GM23248 (cell line): ENCODE measurements at regions of chr11 and their contacts with region 1.

Region 1: GRCh38 chr11:27485930-27486773 is 13.6 kb upstream of the LGR4 start:
- DNase-seq: peak; percentile 67
- H3K4me3 ChIP-seq: no peak overlapping the region
- H3K27ac ChIP-seq: no peak overlapping the region
- H3K4me1 ChIP-seq: peaks cover 4% of the 10 kb centered on the region; the same call in 1 of the 2 replicates
- H3K27me3 ChIP-seq: no peaks in the 10 kb centered on the region

Region 2: GRCh38 chr11:26319906-26320305 is 1166.2 kb before region 1 on chr11:
- in situ Hi-C with region 1: loop called (anchors 25 kb)
- DNase-seq: peak; percentile 53
- H3K4me3 ChIP-seq: no peak overlapping the region
- H3K27ac ChIP-seq: no peak overlapping the region
- H3K4me1 ChIP-seq: no peaks in the 10 kb centered on the region
- H3K27me3 ChIP-seq: no peaks in the 10 kb centered on the region

Region 3: GRCh38 chr11:26753723-26754504 is 732.2 kb before region 1 on chr11:
- in situ Hi-C with region 1: loop called (anchors 10 kb)
- DNase-seq: peak; percentile 83
- H3K4me3 ChIP-seq: no peak overlapping the region
- H3K27ac ChIP-seq: no peak overlapping the region
- H3K4me1 ChIP-seq: no peaks in the 10 kb centered on the region
- H3K27me3 ChIP-seq: no peaks in the 10 kb centered on the region

Region 4: DNA sequence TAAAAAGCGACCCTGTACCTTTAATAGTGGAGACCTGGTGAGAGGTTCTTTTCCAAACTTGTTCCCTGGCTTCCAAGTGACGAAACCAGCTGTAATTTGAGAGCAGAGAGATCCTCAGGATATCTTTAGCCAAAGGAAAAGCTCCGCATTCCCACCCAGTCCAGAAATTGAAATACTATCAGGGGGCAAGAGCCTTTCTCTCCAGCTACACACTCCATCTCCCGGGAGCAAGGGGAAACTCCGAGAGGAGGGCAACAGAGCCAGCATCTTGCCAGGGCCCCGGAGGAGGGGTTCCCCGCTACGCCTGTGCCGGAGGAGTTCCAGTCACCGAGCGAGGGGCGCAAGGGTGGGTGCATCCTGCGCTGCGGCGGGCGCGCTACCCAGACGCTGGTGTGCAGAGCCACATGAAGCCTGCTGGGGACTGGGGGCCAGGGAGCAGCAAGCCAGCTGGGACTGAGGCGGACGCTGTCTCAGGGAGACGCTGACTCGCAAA is 492.1 kb before region 1 on chr11 and contains the start of gene FIBIN:
- in situ Hi-C with region 1: loop called (anchors 25 kb)
- DNase-seq: peak; percentile 69
- H3K4me3 ChIP-seq: peak within 1 kb of the TSS; percentile 95
- H3K27ac ChIP-seq: peak within 1 kb of the TSS; percentile 62
- H3K4me1 ChIP-seq: peaks cover 35% of the 10 kb centered on the region
- H3K27me3 ChIP-seq: no peaks in the 10 kb centered on the region
- total RNA-seq, gene FIBIN: 45.3 and 48.1 TPM in 2 replicates